Left lung (tissue), 14 donors: ENCODE measurements at regions of chr1 and their contacts with region 1.

Region 1: DNA sequence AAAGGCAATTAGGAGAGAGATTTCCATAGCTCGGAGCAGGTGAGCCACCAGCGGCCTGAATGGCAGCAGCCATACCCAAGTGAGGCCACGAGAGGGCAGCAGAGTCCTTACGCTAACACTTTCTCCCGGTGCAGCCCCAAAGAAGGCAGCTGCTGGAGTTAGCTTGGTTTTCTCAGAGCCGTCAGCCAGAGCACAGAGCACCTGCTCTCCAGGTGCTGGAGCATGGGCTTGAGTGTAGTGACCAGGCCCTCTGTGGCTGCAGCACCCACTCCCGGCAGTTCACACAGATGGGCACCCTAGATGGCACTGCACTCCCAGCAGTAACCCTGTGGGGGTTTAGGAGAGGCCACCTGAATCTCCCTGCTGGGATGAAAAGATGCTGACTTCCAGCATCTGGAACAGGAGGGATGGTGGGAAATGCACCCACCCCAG is 45.8 kb downstream of the TMCC2 start:
- DNase-seq: peak; percentile 68 to 93 (median 86)
- ATAC-seq: peak; percentile 86
- H3K4me3 ChIP-seq: no peak overlapping the region
- H3K27ac ChIP-seq: no peak overlapping the region
- H3K4me1 ChIP-seq: peaks cover 7 to 40% of the 10 kb centered on the region in 2 donors
- H3K27me3 ChIP-seq: no peaks in the 10 kb centered on the region
- CTCF ChIP-seq: peak; percentile 97 to 99

Region 2: DNA sequence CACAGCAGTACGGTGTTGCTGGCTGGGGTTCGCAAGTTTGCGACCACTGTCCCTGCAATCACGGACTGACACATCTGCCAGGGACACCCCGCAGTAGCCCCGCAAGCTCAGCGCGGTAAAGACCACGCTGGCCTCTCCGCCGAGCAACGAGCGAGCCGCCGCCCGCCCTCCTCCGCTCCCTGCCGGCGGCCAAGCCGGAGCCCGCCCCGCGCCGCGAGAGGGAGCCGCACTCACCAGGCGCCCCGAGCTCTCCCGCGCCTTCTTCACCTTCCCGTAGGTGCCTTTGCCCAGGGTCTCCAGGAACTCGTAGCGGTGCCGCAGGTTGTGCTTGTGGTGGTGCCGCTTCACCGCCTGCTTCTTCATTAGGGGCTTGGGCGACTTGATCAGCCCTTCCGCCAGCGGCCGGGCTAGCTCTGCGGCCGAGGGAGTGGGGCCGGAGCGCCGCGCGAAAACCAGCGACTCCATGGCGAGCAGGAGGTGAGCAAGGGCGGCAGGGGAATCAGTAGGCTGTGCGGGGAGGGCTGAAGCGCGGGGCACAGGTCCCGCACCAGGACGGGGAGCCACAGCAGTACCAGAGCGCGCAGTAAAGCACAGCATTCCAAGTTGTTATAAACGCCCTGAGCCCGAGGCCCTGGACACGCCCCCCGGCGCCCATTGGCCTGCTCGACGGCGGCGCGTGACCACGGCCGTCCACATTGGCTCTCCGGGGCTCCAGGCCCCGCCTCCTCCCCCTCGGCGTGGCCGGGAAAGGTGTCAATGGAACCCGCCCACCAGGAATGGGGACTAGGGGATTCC is 47.8 kb after region 1 on chr1 and contains the start of gene NUAK2:
- intact Hi-C with region 1: loop called (anchors 2 to 5 kb)
- DNase-seq: peak; percentile 80 to 98 (median 94)
- ATAC-seq: peak; percentile 83
- H3K4me3 ChIP-seq: peak within 1 kb of the TSS; percentile 81 to 92
- H3K27ac ChIP-seq: peak within 1 kb of the TSS; percentile 82 to 94
- H3K4me1 ChIP-seq: peaks cover 11 to 57% of the 10 kb centered on the region in 2 donors
- H3K27me3 ChIP-seq: no peaks in the 10 kb centered on the region
- CTCF ChIP-seq: peak in 1 of 2 donors; percentile 9
- polyA plus RNA-seq, gene NUAK2: 6.1 to 10.5 (median 8.1) TPM

Region 3: DNA sequence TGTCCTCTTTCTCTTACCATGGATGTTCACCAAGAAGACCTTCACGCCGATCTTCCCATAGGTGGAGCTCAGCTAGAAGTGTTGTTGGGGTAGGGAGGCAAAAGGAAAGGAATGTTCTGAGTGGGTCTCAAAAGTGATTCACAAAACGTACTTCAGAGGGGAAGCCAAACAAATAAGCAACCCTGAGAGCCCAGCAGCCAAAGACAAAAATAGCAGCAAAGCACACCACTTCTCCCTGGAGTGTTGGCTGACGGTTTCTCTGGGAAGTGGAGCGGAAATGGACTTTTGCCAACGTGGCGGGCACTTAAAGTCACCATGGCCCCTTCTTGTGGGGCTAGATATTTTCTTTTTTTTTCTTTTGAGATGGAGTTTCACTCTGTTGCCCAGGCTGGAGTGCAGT is 646.6 kb after region 1 on chr1:
- intact Hi-C with region 1: no loop called
- DNase-seq: peak; percentile 59 to 87 (median 76)
- ATAC-seq: peak; percentile 80
- H3K4me3 ChIP-seq: no peak overlapping the region
- H3K27ac ChIP-seq: peak overlapping the region; percentile 35 to 59
- H3K4me1 ChIP-seq: peaks cover 7 to 12% of the 10 kb centered on the region in 2 donors
- H3K27me3 ChIP-seq: no peaks in the 10 kb centered on the region
- CTCF ChIP-seq: no peak